A673 (cell line): ENCODE measurements at regions of chr7 and their contacts with region 1.

Region 1: DNA sequence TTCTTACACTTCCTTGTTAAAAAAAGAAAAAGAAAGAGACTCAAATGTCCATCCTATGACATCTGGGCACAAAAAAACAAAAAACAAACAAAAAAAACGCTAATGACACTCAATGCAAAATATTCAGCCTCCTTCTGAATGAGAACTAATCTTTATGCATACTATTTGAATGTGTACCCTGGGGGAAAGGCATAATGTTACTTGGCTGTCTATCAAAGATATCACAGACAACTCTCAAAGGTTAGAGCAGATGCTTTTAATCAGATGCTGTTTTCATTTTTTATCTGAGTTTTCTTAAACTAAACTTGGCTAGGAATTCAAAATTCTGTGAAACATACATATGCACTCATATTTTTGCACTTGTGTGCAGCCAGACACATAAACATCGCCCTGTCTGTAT is 745.8 kb downstream of the CNTNAP2 start:
- DNase-seq: peak; percentile 22
- H3K4me3 ChIP-seq: no peak overlapping the region
- H3K27ac ChIP-seq: no peak overlapping the region
- H3K4me1 ChIP-seq: peaks cover 15% of the 10 kb centered on the region
- H3K27me3 ChIP-seq: no peaks in the 10 kb centered on the region
- CTCF ChIP-seq: no peak

Region 2: GRCh38 chr7:146654048-146654447 is 208.4 kb before region 1 on chr7:
- CTCF ChIA-PET with region 1: no interaction called
- POLR2A ChIA-PET with region 1: no interaction called
- intact Hi-C with region 1: no loop called
- DNase-seq: no peak
- H3K4me3 ChIP-seq: no peak overlapping the region
- H3K27ac ChIP-seq: no peak overlapping the region
- H3K4me1 ChIP-seq: no peaks in the 10 kb centered on the region
- H3K27me3 ChIP-seq: no peaks in the 10 kb centered on the region
- CTCF ChIP-seq: no peak

Region 3: DNA sequence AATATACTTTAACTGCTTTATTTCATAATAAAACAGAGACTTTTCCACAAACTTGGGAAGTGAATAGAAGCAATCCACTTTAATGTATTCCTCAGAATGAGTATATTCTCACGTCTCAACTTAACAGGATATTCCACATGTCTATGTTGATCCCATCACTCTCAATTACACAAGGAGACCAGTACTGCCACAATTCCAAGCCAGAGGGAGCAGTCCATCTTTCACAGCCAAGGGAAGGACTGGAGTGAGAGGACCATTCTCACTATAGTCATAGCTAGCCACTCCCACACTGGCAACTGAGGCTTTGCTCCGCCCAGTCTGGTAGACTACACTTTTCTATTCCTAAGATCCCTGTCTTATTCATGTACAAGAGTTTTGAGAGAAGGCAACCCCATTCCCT is 191.9 kb before region 1 on chr7:
- CTCF ChIA-PET with region 1: no interaction called
- POLR2A ChIA-PET with region 1: no interaction called
- intact Hi-C with region 1: no loop called
- DNase-seq: no peak
- H3K4me3 ChIP-seq: no peak overlapping the region
- H3K27ac ChIP-seq: no peak overlapping the region
- H3K4me1 ChIP-seq: no peaks in the 10 kb centered on the region
- H3K27me3 ChIP-seq: no peaks in the 10 kb centered on the region
- CTCF ChIP-seq: no peak

Region 4: DNA sequence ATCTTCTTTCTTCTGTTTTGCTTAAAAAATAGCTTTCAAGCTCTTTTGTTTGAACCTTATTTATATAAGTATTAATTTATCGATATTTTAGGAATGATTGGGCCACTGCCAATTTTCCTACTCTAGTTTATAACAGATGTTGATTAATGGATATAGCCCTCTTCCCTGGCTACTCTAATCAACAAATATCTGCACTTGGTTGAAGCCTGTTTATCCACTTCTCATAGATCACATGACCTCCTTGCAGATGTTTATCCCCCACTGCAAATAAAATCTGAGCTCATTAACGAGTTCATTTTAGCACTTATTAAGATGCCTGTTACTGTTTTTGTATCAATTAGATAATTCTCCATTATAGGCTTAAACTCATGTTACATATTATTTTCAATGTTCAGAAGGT is 30.5 kb before region 1 on chr7:
- CTCF ChIA-PET with region 1: no interaction called
- POLR2A ChIA-PET with region 1: no interaction called
- intact Hi-C with region 1: loop called (anchors 1 kb)
- DNase-seq: no peak
- H3K4me3 ChIP-seq: no peak overlapping the region
- H3K27ac ChIP-seq: no peak overlapping the region
- H3K4me1 ChIP-seq: peaks cover 7% of the 10 kb centered on the region
- H3K27me3 ChIP-seq: no peaks in the 10 kb centered on the region
- CTCF ChIP-seq: no peak

Region 5: GRCh38 chr7:147412782-147413556 is 550.6 kb after region 1 on chr7:
- CTCF ChIA-PET with region 1: no interaction called
- POLR2A ChIA-PET with region 1: no interaction called
- intact Hi-C with region 1: no loop called
- DNase-seq: no peak
- H3K4me3 ChIP-seq: no peak overlapping the region
- H3K27ac ChIP-seq: no peak overlapping the region
- H3K4me1 ChIP-seq: no peaks in the 10 kb centered on the region
- H3K27me3 ChIP-seq: no peaks in the 10 kb centered on the region
- CTCF ChIP-seq: no peak